ENCODE measurements at regions of chr3 and their contacts with region 1.

Region 1: GRCh38 chr3:99833617-99834205 is 16.0 kb downstream of the CMSS1 start:
- DNase-seq: no peak
- ATAC-seq: no peak
- H3K4me3 ChIP-seq: no peak overlapping the region
- H3K27ac ChIP-seq: no peak overlapping the region
- H3K4me1 ChIP-seq: 0 out of 2 replicates have a peak, but pooled peaks cover 12% of the 10 kb centered on the region
- H3K27me3 ChIP-seq: no peaks in the 10 kb centered on the region
- CTCF ChIP-seq: no peak

Region 2: DNA sequence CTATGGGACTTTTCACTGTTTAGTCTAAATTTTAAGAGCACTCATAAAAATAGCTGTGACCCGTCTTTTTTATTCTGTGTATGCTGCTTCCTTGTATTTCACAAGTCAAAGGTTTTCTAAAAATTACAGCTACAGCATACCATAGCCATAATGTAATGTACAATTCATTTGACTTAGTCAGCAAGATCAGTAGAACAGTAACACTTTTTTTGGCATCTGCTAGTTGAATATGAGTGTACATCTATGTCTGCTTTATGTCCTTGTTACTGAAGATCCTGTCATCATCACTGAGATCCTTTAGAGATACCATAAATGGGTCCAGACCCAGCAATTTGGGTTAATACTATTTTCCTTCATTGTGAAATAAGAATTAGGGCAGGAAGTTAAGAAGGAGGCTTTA is 26.1 kb after region 1 on chr3:
- CTCF ChIA-PET with region 1: no interaction called
- POLR2A ChIA-PET with region 1: interaction called, 10 read pairs
- intact Hi-C with region 1: no loop called
- DNase-seq: peak; percentile 93
- ATAC-seq: peak; percentile 70
- H3K4me3 ChIP-seq: no peak overlapping the region
- H3K27ac ChIP-seq: peak overlapping the region; percentile 49
- H3K4me1 ChIP-seq: peaks cover 49% of the 10 kb centered on the region
- H3K27me3 ChIP-seq: no peaks in the 10 kb centered on the region
- CTCF ChIP-seq: no peak

Region 3: GRCh38 chr3:100159331-100160153 is 325.8 kb after region 1 on chr3:
- CTCF ChIA-PET with region 1: interaction called, 11 read pairs
- POLR2A ChIA-PET with region 1: no interaction called
- intact Hi-C with region 1: no loop called
- DNase-seq: peak; percentile 87
- ATAC-seq: peak; percentile 77
- H3K4me3 ChIP-seq: peak overlapping the region; percentile 22; the same call in 1 of the 2 replicates
- H3K27ac ChIP-seq: peak overlapping the region; percentile 65
- H3K4me1 ChIP-seq: peaks cover 33% of the 10 kb centered on the region
- H3K27me3 ChIP-seq: no peaks in the 10 kb centered on the region
- CTCF ChIP-seq: no peak

Region 4: GRCh38 chr3:100386437-100387074 is 552.8 kb after region 1 on chr3:
- CTCF ChIA-PET with region 1: interaction called, 12 read pairs
- POLR2A ChIA-PET with region 1: no interaction called
- intact Hi-C with region 1: no loop called
- DNase-seq: no peak
- ATAC-seq: peak; percentile 72
- H3K4me3 ChIP-seq: no peak overlapping the region
- H3K27ac ChIP-seq: no peak overlapping the region
- H3K4me1 ChIP-seq: peaks cover 20% of the 10 kb centered on the region
- H3K27me3 ChIP-seq: no peaks in the 10 kb centered on the region
- CTCF ChIP-seq: no peak

Region 5: GRCh38 chr3:100463002-100463401 is 629.3 kb after region 1 on chr3:
- CTCF ChIA-PET with region 1: no interaction called
- POLR2A ChIA-PET with region 1: no interaction called
- intact Hi-C with region 1: loop called (anchors 10 kb)
- DNase-seq: peak; percentile 79
- ATAC-seq: peak; percentile 94
- H3K4me3 ChIP-seq: no peak overlapping the region; the same call in 1 of the 2 replicates
- H3K27ac ChIP-seq: no peak overlapping the region
- H3K4me1 ChIP-seq: peaks cover 11% of the 10 kb centered on the region
- H3K27me3 ChIP-seq: no peaks in the 10 kb centered on the region
- CTCF ChIP-seq: peak; percentile 93

Region 6: DNA sequence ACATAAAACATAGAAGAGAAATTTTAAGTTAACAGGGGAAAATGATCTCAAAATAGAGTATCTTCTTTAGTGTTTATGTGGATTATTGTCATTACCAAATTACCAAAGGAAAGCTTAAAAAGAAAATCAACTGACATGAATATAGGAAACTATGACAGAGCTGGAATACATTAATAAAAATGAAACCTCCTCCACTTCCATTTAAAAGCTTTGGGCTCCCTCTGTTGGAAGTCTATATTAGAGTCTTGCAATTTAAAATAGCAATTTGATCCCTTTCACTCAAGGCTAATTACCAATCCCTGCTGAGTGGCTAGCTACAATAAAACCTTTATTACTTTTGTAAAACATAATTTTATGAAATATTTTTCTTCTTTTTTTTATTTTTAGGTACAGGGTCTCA is 1548.1 kb after region 1 on chr3:
- CTCF ChIA-PET with region 1: no interaction called
- POLR2A ChIA-PET with region 1: no interaction called
- intact Hi-C with region 1: loop called (anchors 10 kb)
- DNase-seq: peak; percentile 76
- ATAC-seq: peak; percentile 79
- H3K4me3 ChIP-seq: no peak overlapping the region
- H3K27ac ChIP-seq: no peak overlapping the region
- H3K4me1 ChIP-seq: no peaks in the 10 kb centered on the region
- H3K27me3 ChIP-seq: no peaks in the 10 kb centered on the region
- CTCF ChIP-seq: peak; percentile 82